ENCODE measurements at regions of chr4 and their contacts with region 1.

Region 1: DNA sequence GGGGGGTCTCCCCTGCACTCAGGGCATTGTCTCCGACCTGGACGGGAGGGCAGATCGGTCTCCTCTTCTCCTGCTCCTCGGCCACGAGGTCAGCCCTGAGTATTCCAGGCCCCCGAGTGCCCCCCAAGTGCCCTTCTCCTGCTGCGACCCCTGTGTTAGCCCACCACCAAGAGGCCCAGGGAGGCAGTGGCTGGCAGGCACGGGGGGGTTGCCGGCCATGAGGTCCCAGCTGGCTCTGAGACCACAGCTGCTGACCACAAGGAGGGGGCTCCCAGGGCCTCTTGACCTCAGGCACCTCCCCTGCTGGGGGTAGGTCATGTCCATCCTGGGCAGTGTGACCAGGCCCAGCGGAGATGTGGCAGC is 186.1 kb upstream of the PSAPL1 start:
- DNase-seq: no peak
- H3K4me3 ChIP-seq: no peak overlapping the region
- H3K27ac ChIP-seq: no peak overlapping the region
- H3K4me1 ChIP-seq: no peaks in the 10 kb centered on the region
- H3K27me3 ChIP-seq: peaks cover 0 to 42% of the 10 kb centered on the region in 2 donors
- CTCF ChIP-seq: no peak

Region 2: GRCh38 chr4:7607156-7607910 is 13.5 kb before region 1 on chr4:
- intact Hi-C with region 1: no loop called
- DNase-seq: no peak
- H3K4me3 ChIP-seq: no peak overlapping the region
- H3K27ac ChIP-seq: no peak overlapping the region
- H3K4me1 ChIP-seq: no peaks in the 10 kb centered on the region
- H3K27me3 ChIP-seq: peaks cover 0 to 15% of the 10 kb centered on the region in 2 donors
- CTCF ChIP-seq: no peak

Region 3: GRCh38 chr4:7637139-7637538 is 16.3 kb after region 1 on chr4:
- intact Hi-C with region 1: loop called (anchors 1 kb)
- DNase-seq: no peak
- H3K4me3 ChIP-seq: no peak overlapping the region
- H3K27ac ChIP-seq: no peak overlapping the region
- H3K4me1 ChIP-seq: peaks cover 0 to 8% (median 6%) of the 10 kb centered on the region in 4 donors
- H3K27me3 ChIP-seq: peaks cover 0 to 51% of the 10 kb centered on the region in 2 donors
- CTCF ChIP-seq: no peak